ENCODE measurements at regions of chr10 and their contacts with region 1.

Region 1: DNA sequence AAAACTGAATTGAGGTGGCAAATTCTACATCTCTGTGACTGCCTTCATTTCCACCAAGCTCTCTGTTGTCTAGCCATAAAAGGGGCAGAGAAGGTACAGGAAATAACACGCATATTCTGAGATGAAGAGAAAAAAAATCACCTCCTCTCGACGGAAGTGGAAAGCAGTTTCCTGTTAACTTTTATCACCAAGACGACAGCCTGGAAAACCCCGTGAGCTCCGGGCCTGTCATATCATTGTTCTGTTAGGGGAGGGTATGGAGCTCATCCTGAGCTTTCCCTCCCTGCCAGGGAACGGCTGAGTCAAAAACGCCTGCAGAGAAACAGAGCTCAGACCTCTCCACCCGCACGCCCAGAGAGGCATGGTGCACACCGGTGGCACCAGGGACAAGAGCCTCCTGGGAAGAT is 200.3 kb downstream of the PRPF18 start:
- DNase-seq: peak; percentile 92
- H3K4me3 Mint-ChIP-seq: peak overlapping the region; percentile 45
- H3K27ac Mint-ChIP-seq: peak overlapping the region; percentile 93
- H3K4me1 Mint-ChIP-seq: peaks cover 33% of the 10 kb centered on the region
- H3K27me3 Mint-ChIP-seq: no peaks in the 10 kb centered on the region

Region 2: DNA sequence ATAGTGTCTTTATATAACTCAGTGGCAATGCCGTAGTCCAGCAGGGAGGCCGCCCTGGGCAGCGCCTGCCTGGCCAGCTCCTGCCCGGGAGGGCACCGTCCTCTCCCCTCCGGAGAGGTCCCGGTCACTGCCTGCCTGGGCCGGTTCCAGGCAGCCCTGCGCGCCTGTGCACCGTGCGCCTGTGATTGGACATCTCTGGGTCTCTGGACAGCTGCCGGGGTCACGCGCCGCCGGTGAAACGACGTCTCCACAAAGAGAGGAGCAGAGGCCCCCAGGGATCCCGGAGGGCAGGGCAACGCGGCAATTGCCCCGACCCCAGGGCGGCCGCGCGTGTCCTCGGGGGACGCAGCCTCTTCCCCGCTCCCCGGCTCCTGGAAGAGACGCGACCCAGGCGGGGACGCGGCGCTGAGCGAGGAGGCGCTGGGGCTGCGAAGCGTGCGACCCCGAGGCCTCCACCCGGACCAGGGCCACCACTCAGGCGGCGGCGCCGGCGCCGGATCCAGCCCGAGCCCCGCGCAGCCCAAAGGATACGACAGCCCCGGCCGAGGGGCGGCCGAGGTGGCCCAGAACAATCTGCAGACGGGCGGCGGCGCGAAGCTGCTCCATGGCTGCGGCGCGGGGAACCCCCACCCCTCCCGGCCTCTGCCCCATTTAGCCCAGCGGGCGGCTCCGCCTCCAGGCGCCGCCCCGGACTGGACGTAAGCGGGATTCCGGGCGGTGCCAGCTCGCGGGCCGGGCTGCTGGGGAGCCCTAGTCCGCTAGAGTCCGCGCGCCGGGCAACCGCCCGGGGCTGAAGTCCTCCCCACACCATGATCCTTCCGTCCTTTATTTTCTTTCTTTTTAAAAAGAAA is 487.4 kb before region 1 on chr10 and contains the start of gene PHYH:
- CTCF ChIA-PET with region 1: no interaction called
- intact Hi-C with region 1: loop called (anchors 1 kb)
- DNase-seq: peak; percentile 78
- H3K4me3 Mint-ChIP-seq: peak within 1 kb of the TSS; percentile 76
- H3K27ac Mint-ChIP-seq: peak within 1 kb of the TSS; percentile 83
- H3K4me1 Mint-ChIP-seq: peaks cover 24% of the 10 kb centered on the region
- H3K27me3 Mint-ChIP-seq: no peaks in the 10 kb centered on the region
- total RNA-seq, gene PHYH: 13.3 to 14.2 TPM

Region 3: DNA sequence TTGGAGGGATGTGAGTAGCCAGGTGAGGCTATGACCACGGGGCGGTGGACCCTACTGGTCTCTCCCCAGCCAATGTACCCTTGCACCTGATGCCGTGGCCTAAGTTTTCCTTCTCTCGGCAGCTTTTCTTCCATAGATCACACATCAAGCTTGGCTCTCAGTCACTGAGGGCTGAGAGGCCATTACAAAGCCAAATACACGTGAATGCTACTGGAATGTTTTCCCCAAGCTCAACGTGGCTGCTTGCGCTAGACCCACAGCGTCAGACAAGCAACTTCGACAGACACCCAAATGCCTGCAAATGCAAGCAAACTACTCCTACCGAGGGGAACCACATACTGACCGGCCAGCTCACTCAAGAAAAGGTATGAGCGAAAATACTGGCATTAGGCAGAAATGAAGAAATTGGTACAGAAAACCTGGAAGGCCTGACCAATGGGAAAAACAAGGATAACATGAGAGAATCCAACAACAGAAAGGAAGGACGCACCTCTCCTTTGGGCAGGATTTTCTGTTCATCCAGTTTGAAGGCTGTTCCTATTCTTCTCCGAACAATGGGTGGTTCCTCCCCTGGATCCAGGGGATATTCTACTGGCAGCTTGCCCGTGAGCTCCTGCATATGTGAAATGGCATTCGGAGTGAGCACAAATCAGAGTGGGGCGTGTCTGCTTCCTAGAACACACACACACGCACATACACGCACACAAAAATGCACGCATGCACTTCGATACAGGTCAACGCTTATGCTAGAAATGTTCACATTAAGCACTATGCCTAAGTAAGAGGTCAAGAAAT is 116.9 kb before region 1 on chr10:
- CTCF ChIA-PET with region 1: no interaction called
- intact Hi-C with region 1: no loop called
- DNase-seq: no peak
- H3K4me3 Mint-ChIP-seq: no peak overlapping the region
- H3K27ac Mint-ChIP-seq: no peak overlapping the region
- H3K4me1 Mint-ChIP-seq: no peaks in the 10 kb centered on the region
- H3K27me3 Mint-ChIP-seq: no peaks in the 10 kb centered on the region

Region 4: DNA sequence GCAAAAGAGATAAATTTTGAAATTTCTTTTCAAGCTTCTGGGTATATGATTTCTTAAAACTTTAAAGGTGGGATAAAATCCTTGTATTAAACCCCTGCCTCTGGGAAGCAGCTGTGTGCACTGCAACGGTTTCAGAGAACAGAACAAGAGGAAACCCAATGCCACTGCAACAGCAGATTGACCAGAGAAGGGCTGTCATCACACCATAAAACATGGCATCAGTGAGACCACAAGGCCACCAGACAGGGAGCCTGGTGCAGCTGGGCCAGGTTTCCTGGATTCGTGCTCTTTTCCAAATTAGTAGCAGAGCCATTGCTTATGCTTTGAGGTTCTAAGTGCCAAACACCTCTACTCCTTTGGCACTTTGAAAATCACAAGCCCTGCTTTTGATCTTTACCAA is 47.8 kb before region 1 on chr10:
- CTCF ChIA-PET with region 1: no interaction called
- intact Hi-C with region 1: no loop called
- DNase-seq: no peak
- H3K4me3 Mint-ChIP-seq: no peak overlapping the region
- H3K27ac Mint-ChIP-seq: no peak overlapping the region
- H3K4me1 Mint-ChIP-seq: peaks cover 4% of the 10 kb centered on the region
- H3K27me3 Mint-ChIP-seq: no peaks in the 10 kb centered on the region

Region 5: GRCh38 chr10:13758312-13758711 is 28.7 kb before region 1 on chr10:
- CTCF ChIA-PET with region 1: no interaction called
- intact Hi-C with region 1: loop called (anchors 2 kb)
- DNase-seq: peak; percentile 25
- H3K4me3 Mint-ChIP-seq: no peak overlapping the region
- H3K27ac Mint-ChIP-seq: no peak overlapping the region
- H3K4me1 Mint-ChIP-seq: peaks cover 18% of the 10 kb centered on the region
- H3K27me3 Mint-ChIP-seq: peaks cover 2% of the 10 kb centered on the region

Region 6: DNA sequence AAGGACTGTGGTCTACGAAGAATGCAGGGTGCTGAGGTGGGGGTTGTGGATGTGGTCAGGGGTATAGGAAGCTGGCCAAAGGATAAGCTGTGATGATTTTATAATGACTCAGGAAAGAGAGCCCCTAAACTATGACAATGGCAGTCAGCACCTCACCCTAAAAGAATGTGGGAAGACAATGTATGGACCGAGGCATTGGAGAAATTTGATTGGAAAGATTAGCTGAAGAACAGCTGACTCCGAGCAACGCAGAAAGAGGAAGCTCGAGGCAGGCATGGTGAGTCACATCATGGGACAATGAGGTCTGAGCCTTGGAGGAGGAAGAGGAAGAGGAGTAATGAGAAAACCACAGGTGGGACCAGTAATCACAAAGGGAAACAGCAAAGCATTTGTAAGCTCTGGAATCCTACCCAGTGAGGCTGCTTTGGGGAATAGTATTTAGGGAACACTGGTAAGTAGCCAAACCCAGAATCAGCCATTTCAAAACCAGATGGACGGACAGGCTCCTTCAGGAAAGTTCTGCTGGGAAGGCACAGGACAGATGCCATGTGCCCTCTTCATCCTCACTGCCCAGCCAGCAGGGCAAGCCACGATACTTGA is 95.2 kb after region 1 on chr10:
- CTCF ChIA-PET with region 1: no interaction called
- intact Hi-C with region 1: no loop called
- DNase-seq: no peak
- H3K4me3 Mint-ChIP-seq: no peak overlapping the region
- H3K27ac Mint-ChIP-seq: no peak overlapping the region
- H3K4me1 Mint-ChIP-seq: no peaks in the 10 kb centered on the region
- H3K27me3 Mint-ChIP-seq: peaks cover 12% of the 10 kb centered on the region

Region 7: DNA sequence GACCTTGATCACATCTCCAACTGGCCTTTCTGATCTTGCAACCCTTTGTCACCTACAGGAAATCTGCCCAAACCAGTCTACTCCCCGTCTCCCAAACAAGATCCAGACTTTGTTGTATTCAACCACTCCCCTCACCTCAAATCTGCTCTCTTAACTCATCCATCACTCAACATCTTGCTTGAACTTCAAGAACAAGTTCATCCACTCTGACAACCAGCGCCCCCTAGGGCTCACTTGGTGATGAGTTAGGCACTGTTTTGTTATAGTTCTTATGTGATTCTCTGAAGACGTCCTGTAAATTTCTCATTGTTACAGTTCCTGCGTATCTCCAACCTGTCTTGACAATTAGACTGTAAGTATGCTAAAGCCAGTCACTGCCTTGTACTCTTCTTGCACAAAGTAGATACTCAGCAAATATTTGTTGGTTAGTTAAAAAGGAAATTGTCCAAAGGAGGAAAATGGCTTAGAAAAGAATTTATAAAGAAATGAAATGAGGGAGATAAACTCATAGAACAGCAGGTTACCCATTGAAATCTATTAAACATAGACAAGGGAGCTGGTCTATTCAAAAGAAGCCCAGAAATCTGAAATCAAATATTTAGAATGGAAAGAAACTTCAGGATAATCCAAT is 538.4 kb after region 1 on chr10:
- CTCF ChIA-PET with region 1: no interaction called
- intact Hi-C with region 1: loop called (anchors 1 kb)
- DNase-seq: peak; percentile 84
- H3K4me3 Mint-ChIP-seq: no peak overlapping the region
- H3K27ac Mint-ChIP-seq: no peak overlapping the region
- H3K4me1 Mint-ChIP-seq: no peaks in the 10 kb centered on the region
- H3K27me3 Mint-ChIP-seq: peaks cover 24% of the 10 kb centered on the region

Region 8: DNA sequence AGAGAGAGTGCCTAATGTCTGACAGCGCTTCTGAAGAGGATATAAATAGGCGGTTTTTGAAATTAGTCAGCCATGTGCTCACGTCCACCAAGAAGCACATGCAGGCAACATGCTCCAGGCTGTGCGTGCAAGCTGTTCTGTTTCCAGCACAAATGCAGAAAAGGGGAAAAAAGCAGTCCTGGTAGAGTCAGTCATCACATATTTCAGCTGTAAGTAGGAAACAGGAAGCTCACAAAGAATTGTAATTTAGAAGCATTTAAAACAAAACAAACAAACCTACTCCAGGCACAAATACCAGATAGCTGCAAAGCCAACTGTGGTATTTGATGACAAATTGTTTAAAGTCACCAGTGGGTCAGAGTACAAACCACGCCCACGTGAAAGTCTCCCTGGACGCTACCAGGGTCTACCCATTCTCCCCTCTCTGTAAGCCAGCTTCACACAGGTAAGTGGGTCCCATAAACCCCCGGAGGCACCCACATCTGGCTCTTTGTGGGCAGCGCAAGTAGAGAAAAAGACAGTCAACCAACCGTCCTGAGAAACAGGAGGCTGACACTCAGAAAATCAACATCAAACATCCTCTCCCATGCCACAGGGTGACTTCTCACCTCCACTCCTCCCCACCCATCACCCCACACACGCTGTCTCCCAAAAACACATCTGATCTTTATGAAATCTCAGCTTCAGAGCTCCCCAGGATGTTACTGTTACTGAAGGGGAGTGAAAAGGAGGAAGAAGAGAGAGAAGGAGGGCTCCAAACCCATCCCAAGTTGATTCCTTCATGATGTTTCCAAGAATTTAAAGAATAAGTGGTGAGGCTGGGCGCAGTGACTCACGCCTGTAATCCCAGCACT is 801.3 kb after region 1 on chr10:
- CTCF ChIA-PET with region 1: no interaction called
- intact Hi-C with region 1: loop called (anchors 1 kb)
- DNase-seq: peak; percentile 83
- H3K4me3 Mint-ChIP-seq: peak overlapping the region; percentile 63
- H3K27ac Mint-ChIP-seq: peak overlapping the region; percentile 97
- H3K4me1 Mint-ChIP-seq: peaks cover 90% of the 10 kb centered on the region
- H3K27me3 Mint-ChIP-seq: no peaks in the 10 kb centered on the region